A673 (cell line): ENCODE measurements at regions of chr6 and their contacts with region 1.

Region 1: GRCh38 chr6:90478789-90479602 is 107.9 kb downstream of the MAP3K7 start:
- DNase-seq: peak; percentile 96
- H3K4me3 ChIP-seq: no peak overlapping the region
- H3K27ac ChIP-seq: no peak overlapping the region
- H3K4me1 ChIP-seq: peaks cover 29% of the 10 kb centered on the region
- H3K27me3 ChIP-seq: no peaks in the 10 kb centered on the region
- CTCF ChIP-seq: peak; percentile 91

Region 2: DNA sequence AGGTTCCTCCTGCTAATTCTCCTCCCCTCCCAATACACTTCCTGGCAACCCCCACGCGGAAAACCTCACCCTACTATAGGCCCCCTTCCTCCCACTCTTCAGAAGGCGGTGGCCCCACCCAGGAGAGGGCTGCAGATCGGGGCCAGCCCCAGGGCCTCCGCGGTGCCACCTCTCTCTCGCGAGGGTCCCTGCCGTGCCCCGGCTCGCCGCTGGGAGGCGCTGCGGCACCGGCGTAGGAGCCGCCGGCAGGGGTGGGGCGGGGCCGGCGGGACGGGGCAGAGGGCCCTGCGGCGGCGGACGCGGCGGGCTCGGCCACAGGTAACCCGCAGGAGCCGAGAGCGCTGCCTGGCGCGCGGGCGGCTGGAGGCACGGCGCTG is 1046.1 kb before region 1 on chr6 and contains the start of gene ANKRD6:
- CTCF ChIA-PET with region 1: no interaction called
- POLR2A ChIA-PET with region 1: no interaction called
- intact Hi-C with region 1: loop called (anchors 10 kb)
- DNase-seq: peak; percentile 83
- H3K4me3 ChIP-seq: peak within 1 kb of the TSS; percentile 83
- H3K27ac ChIP-seq: peak within 1 kb of the TSS; percentile 81
- H3K4me1 ChIP-seq: peaks cover 55% of the 10 kb centered on the region
- H3K27me3 ChIP-seq: no peaks in the 10 kb centered on the region
- CTCF ChIP-seq: peak; percentile 70
- total RNA-seq, gene ANKRD6: 25.4 and 36.4 TPM in 2 replicates

Region 3: DNA sequence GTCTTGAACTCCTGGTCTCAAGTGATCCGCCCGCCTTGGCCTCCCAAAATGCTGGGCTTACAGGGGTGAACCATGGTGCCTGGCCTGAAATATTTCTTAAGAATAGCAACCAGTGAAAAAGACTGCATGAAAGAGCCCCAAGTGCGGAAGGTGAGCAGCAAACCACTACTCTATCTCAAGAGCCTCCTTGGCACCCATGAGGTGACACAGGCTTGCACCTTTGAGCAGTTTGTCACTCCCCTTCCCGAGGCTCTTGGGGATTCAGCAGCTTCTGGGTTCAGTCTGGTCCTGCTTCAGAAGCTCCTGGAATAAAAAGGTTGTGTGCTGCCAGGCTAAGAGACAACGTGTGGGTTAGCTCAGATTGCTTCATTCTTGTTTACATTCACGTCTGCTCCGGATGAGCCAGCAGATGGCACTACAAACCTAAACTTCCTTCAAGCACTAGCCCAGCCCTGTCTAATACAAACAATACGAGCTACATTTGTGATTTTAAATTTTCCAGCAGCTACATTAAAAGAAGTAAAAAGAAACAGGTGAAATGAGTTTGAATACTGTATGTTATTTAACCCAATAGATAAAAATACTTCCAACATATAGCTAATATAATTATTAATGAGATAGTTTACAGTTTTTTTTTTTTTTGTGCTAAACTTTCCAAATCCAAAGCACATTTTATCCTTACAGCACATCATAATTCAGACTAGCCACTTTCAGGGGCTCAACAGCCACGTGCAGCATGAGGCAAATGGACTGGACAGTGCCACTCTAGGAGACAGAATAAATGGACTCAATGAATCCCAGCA is 538.6 kb before region 1 on chr6:
- CTCF ChIA-PET with region 1: interaction called, 36 read pairs
- POLR2A ChIA-PET with region 1: no interaction called
- intact Hi-C with region 1: loop called (anchors 1 kb)
- DNase-seq: peak; percentile 82
- H3K4me3 ChIP-seq: no peak overlapping the region
- H3K27ac ChIP-seq: no peak overlapping the region
- H3K4me1 ChIP-seq: no peaks in the 10 kb centered on the region
- H3K27me3 ChIP-seq: no peaks in the 10 kb centered on the region
- CTCF ChIP-seq: peak; percentile 81

Region 4: GRCh38 chr6:89970609-89971337 is 508.2 kb before region 1 on chr6:
- CTCF ChIA-PET with region 1: interaction called, 7 read pairs
- POLR2A ChIA-PET with region 1: no interaction called
- intact Hi-C with region 1: loop called (anchors 1 kb)
- DNase-seq: peak; percentile 77
- H3K4me3 ChIP-seq: no peak overlapping the region
- H3K27ac ChIP-seq: no peak overlapping the region
- H3K4me1 ChIP-seq: no peaks in the 10 kb centered on the region
- H3K27me3 ChIP-seq: peaks cover 20% of the 10 kb centered on the region
- CTCF ChIP-seq: peak; percentile 79

Region 5: GRCh38 chr6:90285611-90286381 is 193.2 kb before region 1 on chr6:
- CTCF ChIA-PET with region 1: interaction called, 4 read pairs
- POLR2A ChIA-PET with region 1: no interaction called
- intact Hi-C with region 1: loop called (anchors 1 kb)
- DNase-seq: no peak
- H3K4me3 ChIP-seq: no peak overlapping the region
- H3K27ac ChIP-seq: no peak overlapping the region
- H3K4me1 ChIP-seq: peaks cover 11% of the 10 kb centered on the region
- H3K27me3 ChIP-seq: peaks cover under 1% of the 10 kb centered on the region
- CTCF ChIP-seq: no peak

Region 6: DNA sequence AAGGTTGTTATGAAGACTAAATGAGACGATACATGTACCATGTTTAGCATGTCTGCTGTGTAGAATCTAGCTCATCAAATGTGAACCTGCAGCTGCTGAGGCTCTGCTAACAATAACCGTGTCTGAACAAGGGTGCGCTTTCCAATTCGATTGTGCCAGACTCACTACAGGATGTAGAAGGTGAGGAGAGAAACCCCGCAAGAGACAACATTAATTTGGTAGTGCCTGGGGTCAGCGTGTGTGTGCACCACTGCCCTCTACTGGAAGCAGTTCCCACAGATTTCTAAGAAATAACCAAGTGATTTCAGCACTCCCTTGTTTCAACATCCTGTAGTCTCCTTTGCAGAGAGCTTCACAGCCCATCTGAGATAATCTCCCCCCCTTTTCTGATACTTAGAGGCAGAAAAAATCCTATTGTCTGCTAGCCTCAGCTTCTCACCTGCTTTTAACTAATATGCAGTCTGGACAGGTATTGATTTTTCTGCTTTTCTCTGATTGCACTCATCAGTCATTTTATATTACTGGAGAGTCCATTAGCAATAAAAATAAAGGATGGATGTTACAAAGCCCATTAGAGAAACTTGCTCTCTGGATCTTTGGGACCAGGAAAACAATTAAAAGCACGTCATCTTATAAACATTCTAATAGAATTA is 85.6 kb before region 1 on chr6:
- CTCF ChIA-PET with region 1: no interaction called
- POLR2A ChIA-PET with region 1: no interaction called
- intact Hi-C with region 1: loop called (anchors 5 kb)
- DNase-seq: peak; percentile 66
- H3K4me3 ChIP-seq: no peak overlapping the region
- H3K27ac ChIP-seq: no peak overlapping the region
- H3K4me1 ChIP-seq: no peaks in the 10 kb centered on the region
- H3K27me3 ChIP-seq: peaks cover 14% of the 10 kb centered on the region
- CTCF ChIP-seq: peak; percentile 80